Gastrocnemius medialis (tissue), 4 donors: ENCODE measurements at regions of chrX and their contacts with region 1.

Region 1: DNA sequence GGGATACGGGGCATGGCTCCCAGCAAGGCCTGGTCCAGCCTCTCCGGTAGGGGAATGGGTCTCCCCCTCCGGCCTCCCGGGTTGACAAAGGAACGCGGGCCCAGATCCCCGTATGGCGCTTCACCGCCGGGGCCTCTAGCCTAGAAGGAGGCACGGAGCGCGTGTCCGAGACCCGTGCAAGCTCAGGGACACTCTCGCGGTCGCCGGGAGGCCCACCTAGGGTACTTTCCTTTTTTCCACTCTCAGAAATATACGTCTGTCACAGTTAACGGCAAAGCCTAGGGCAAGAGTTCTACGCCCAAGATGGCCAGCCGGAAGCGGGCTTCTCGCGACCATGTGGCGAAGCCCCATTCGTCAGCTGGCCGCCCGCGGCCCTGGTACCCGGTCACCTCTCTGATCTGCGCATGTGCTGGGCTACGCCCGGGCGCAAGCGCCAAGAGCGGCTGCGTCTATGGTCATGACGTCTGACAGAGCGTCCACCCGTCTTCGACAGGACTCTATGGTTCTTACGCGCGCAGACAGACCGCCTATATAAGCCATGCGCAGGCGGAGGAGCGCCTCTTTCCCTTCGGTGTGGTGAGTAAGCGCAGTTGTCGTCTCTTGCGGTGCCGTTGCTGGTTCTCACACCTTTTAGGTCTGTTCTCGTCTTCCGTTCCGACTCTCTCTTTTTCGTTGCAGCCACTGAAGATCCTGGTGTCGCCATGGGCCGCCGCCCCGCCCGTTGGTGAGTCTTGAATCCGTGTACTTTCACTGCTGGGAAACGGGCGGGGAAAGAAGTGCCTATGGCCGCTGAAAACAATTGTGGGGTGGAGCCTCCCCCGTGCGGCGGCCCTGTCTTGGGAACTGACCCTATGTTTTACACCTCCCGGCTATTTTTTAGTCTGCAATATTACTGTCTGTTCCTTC is at the start of gene RPL10:
- DNase-seq: peak; percentile 92 to 96
- ATAC-seq: peak; percentile 83 to 91
- H3K4me3 ChIP-seq: peak within 1 kb of the TSS; percentile 68 to 85 (median 80)
- H3K27ac ChIP-seq: peak within 1 kb of the TSS; percentile 93 to 99 (median 98)
- H3K4me1 ChIP-seq: peaks cover 10 to 18% of the 10 kb centered on the region in 2 donors
- H3K27me3 ChIP-seq: no peaks in the 10 kb centered on the region
- CTCF ChIP-seq: no peak
- POLR2A ChIP-seq: peak; percentile 87 to 91
- total RNA-seq, gene RPL10: 3,899 to 6,066 (median 5,720) TPM

Region 2: GRCh38 chrX:154411322-154411980 is 13.4 kb after region 1 on chrX and contains the start of gene TAFAZZIN:
- in situ Hi-C with region 1: no loop called
- intact Hi-C with region 1: loop called (anchors 1 kb)
- DNase-seq: peak; percentile 59 to 72
- ATAC-seq: peak; percentile 44 to 50
- H3K4me3 ChIP-seq: peak within 1 kb of the TSS; percentile 67 to 90 (median 78)
- H3K27ac ChIP-seq: peak within 1 kb of the TSS; percentile 91 to 98 (median 98)
- H3K4me1 ChIP-seq: peaks cover 12 to 32% of the 10 kb centered on the region in 2 donors
- H3K27me3 ChIP-seq: no peaks in the 10 kb centered on the region
- CTCF ChIP-seq: no peak
- POLR2A ChIP-seq: peak; percentile 71 to 82
- total RNA-seq, gene TAFAZZIN: 17.6 to 28.3 (median 20.1) TPM

Region 3: GRCh38 chrX:154436983-154437719 is 39.1 kb after region 1 on chrX and contains the start of gene GDI1:
- in situ Hi-C with region 1: no loop called
- intact Hi-C with region 1: loop called (anchors 5 kb)
- DNase-seq: peak in 1 of 2 donors; percentile 36
- ATAC-seq: peak; percentile 72 to 75
- H3K4me3 ChIP-seq: peak within 1 kb of the TSS; percentile 64 to 84 (median 66)
- H3K27ac ChIP-seq: peak within 1 kb of the TSS; percentile 79 to 88 (median 82)
- H3K4me1 ChIP-seq: peaks cover 0 to 5% of the 10 kb centered on the region in 2 donors
- H3K27me3 ChIP-seq: no peaks in the 10 kb centered on the region
- CTCF ChIP-seq: no peak
- POLR2A ChIP-seq: peak; percentile 49 to 62
- total RNA-seq, gene GDI1: 19.8 to 54.5 (median 39.0) TPM

Region 4: DNA sequence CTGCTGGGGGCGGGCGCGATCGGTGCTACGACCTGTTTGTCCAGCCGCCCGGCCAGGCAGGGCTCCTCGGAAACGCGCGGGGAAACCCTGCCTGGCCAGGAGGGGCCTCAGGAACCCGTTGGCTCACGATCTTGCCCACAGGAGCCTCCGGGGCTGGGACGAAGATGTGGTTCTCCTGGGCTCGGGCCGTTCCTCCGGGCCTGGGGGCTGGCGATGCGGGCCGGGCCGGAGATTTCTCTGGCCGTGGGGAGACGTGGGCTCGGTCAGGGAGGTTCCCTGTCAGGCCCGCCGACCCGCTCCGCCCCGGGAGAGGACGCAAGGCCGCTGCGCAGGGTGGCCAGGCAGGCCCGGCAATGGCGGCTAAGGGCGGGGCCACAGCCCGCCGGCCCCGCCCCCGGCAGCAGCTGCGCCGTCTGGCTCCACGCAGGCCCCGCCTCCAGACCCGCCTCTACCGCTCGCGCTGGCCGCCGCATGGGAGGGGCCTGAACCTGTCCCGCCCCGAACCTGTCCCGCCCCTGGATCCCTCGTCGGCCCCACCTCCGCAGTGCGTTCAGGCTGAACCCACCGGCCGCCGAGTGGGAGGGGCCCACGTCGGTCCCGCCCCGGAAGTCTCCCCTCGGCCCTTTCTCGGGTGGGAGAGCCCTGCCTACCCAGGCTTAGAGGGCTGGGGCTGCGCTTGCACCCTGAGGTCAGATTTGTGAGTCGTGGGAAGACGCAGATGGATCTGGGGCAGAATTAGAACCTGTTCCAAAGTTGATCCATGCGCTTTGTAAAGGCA is 118.0 kb after region 1 on chrX and contains the start of gene FAM3A:
- in situ Hi-C with region 1: no loop called
- intact Hi-C with region 1: loop called (anchors 5 kb)
- DNase-seq: peak; percentile 93
- ATAC-seq: peak; percentile 86 to 92
- H3K4me3 ChIP-seq: peak within 1 kb of the TSS; percentile 68 to 89 (median 72)
- H3K27ac ChIP-seq: peak within 1 kb of the TSS; percentile 88 to 96 (median 95)
- H3K4me1 ChIP-seq: peaks cover 0 to 12% of the 10 kb centered on the region in 2 donors
- H3K27me3 ChIP-seq: no peaks in the 10 kb centered on the region
- CTCF ChIP-seq: no peak
- POLR2A ChIP-seq: peak; percentile 88 to 89
- total RNA-seq, gene FAM3A: 28.3 to 44.5 (median 37.8) TPM